Right lobe of liver (tissue), 6 donors: ENCODE measurements at regions of chr14 and their contacts with region 1.

Region 1: DNA sequence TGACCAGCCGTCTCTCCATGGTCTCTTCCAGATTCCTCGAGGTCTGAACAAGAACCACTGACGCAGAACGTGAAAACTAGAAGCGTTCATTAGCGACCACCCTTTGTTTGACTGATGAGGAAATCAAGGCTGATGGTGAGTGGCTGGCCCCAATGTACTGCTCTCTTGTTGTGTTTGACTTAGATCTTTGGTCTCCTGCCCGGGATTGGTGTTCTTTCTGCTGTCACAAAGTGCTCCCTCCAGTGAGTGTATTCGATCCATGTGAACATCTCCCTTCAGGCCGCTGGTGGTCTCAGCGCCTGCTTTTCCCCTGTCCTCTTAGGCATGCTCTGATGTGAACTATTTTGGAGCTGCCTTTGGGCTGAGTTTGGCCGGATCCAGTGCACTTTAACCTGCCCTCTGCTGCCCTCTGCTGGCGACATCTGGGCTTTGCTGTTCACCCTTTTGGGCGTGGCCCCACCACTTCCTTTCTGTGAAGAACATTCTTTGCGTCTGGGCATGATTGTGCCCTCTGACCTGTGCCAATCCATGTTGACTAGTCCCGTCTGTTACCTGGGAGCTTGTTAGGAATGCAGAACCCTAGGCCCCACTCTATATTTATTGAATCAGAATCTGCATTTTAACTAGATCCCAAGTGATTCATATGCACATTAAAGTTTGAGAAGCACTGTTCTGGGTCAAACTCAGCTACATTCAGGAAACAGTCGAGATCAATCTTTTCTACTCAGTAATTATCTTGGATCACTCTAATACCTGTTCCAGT is 279.2 kb downstream of the TTC6 start:
- DNase-seq: peak; percentile 79 to 84 (median 84)
- ATAC-seq: peak; percentile 88 to 95 (median 93)
- H3K4me3 ChIP-seq: no peak overlapping the region
- H3K27ac ChIP-seq: no peak overlapping the region
- H3K4me1 ChIP-seq: peaks cover 0 to 19% (median 3%) of the 10 kb centered on the region in 4 donors
- H3K27me3 ChIP-seq: no peaks in the 10 kb centered on the region
- CTCF ChIP-seq: peak; percentile 84 to 91 (median 88)
- POLR2A ChIP-seq: no peak

Region 2: DNA sequence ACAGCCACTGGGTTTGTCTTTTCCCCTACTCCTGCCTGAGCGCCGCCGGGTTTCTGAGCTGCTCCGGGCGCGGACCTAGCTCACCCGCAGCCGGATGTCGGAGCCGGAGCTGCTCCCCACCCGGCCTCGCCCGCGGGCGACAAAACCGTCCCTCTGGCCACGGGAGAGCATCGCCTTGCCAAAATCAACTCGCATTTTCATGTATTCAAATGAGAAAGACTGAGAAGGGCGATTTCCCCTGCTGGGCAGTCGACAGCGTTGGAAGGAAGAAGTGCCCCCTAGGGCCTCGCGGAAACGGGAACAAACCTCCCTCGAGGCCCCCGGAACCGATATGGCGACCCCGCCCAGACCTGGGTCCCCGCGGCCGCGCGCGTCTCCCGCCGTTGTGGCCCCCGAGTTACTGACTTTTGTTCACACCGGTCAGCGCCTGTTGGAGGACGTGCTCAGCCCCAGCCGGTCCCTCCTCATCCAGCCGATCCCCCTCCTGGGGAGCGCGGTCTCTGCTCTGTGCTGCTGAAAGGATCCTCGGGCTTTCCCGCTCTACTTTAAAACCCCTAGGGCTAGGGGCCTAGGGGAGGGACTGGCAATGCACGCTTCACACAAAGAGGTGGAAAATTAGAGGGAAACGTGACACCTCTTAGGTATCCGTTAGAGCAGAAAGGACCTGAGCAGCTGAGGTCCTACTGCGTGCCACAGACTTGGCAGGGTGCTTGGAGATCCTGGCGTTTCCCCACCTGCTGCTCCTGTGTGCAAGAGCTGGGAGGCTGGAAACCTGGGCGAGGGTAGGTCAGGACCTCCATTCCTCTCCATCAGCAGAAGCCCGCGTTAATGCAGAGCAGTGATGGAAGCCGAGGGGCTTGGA is 274.9 kb before region 1 on chr14:
- intact Hi-C with region 1: loop called in 1 of 2 experiments (anchors 10 kb)
- DNase-seq: peak in 1 of 3 donors; percentile 29
- ATAC-seq: no peak
- H3K4me3 ChIP-seq: peak overlapping the region; percentile 32 to 54 (median 41)
- H3K27ac ChIP-seq: peak overlapping the region; percentile 13 to 47 (median 37)
- H3K4me1 ChIP-seq: peaks cover 0 to 45% (median 15%) of the 10 kb centered on the region in 4 donors
- H3K27me3 ChIP-seq: no peaks in the 10 kb centered on the region
- CTCF ChIP-seq: no peak
- POLR2A ChIP-seq: no peak

Region 3: GRCh38 chr14:37709419-37710195 is 165.0 kb before region 1 on chr14:
- intact Hi-C with region 1: loop called in 1 of 2 experiments (anchors 10 kb)
- DNase-seq: no peak
- ATAC-seq: peak in 3 of 4 donors; percentile 65 to 67 (median 66)
- H3K4me3 ChIP-seq: no peak overlapping the region
- H3K27ac ChIP-seq: no peak overlapping the region
- H3K4me1 ChIP-seq: peaks cover 0 to 19% (median 3%) of the 10 kb centered on the region in 4 donors
- H3K27me3 ChIP-seq: no peaks in the 10 kb centered on the region
- CTCF ChIP-seq: peak; percentile 46 to 56 (median 51)
- POLR2A ChIP-seq: no peak